Activated CD4-positive, alpha-beta memory T cell treated with anti-CD3 and anti-CD28 coated beads for 36 hours (primary cell): ENCODE measurements at regions of chr20 and their contacts with region 1.

Region 1: GRCh38 chr20:50179507-50180016 is 11.1 kb upstream of the CEBPB start:
- DNase-seq: no peak
- H3K4me3 Mint-ChIP-seq: no peak overlapping the region
- H3K27ac Mint-ChIP-seq: no peak overlapping the region
- H3K4me1 Mint-ChIP-seq: no peaks in the 10 kb centered on the region
- H3K27me3 Mint-ChIP-seq: peaks cover 3% of the 10 kb centered on the region

Region 2: GRCh38 chr20:50054626-50055511 is 124.7 kb before region 1 on chr20:
- CTCF ChIA-PET with region 1: no interaction called
- POLR2A ChIA-PET with region 1: no interaction called
- intact Hi-C with region 1: no loop called
- DNase-seq: no peak
- H3K4me3 Mint-ChIP-seq: no peak overlapping the region
- H3K27ac Mint-ChIP-seq: no peak overlapping the region
- H3K4me1 Mint-ChIP-seq: no peaks in the 10 kb centered on the region
- H3K27me3 Mint-ChIP-seq: peaks cover 6% of the 10 kb centered on the region

Region 3: DNA sequence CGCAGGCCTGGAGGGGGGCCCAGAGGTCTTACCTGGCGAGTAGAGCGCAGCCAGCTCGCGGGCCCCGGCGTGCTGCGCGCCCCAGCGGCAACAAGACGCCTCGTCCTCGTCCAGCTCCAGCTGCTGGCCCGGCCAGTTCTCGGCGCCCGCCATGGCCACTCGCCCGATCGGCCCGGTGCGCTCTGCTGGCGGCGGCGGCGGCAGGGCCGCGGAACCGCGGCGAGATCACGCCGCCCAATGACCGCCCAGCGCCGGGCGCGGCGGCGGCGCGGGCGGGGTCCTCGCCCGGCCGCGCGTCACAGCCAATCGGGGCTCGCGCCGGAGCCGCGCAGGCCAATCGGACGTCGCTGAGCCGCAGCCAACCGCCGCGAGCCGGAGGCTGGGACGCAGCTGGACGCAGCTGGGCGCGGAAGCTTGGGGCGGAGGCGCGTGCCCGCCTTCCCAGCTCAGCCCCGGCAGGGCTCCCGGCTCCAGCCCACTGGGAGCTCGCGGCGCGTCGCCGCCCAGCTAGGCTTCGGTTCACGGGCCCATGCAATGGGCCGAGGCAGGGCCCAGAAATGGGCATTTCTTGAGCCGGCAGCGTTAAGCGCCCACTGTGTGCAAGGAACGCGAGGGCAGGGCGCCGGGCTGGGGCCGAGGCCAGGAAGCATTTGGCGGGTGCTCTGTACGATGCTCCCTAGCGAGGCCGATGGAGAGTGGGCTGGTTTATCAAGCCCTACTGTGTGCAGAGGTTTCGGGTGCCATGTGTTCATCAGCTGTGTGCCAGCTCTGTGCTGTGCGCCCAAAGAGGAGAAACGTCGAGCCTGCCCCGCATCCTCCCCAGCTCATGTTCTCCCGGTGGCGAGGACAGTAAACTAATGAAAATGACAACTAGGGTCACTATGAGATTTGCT is 25.8 kb before region 1 on chr20 and contains the start of gene PEDS1:
- CTCF ChIA-PET with region 1: interaction called, 25 read pairs
- POLR2A ChIA-PET with region 1: no interaction called
- intact Hi-C with region 1: no loop called
- DNase-seq: peak; percentile 90
- H3K4me3 Mint-ChIP-seq: peak within 1 kb of the TSS; percentile 81
- H3K27ac Mint-ChIP-seq: peak within 1 kb of the TSS; percentile 70
- H3K4me1 Mint-ChIP-seq: peaks cover 43% of the 10 kb centered on the region
- H3K27me3 Mint-ChIP-seq: no peaks in the 10 kb centered on the region
- total RNA-seq, gene PEDS1: 15.0 to 16.9 TPM

Region 4: DNA sequence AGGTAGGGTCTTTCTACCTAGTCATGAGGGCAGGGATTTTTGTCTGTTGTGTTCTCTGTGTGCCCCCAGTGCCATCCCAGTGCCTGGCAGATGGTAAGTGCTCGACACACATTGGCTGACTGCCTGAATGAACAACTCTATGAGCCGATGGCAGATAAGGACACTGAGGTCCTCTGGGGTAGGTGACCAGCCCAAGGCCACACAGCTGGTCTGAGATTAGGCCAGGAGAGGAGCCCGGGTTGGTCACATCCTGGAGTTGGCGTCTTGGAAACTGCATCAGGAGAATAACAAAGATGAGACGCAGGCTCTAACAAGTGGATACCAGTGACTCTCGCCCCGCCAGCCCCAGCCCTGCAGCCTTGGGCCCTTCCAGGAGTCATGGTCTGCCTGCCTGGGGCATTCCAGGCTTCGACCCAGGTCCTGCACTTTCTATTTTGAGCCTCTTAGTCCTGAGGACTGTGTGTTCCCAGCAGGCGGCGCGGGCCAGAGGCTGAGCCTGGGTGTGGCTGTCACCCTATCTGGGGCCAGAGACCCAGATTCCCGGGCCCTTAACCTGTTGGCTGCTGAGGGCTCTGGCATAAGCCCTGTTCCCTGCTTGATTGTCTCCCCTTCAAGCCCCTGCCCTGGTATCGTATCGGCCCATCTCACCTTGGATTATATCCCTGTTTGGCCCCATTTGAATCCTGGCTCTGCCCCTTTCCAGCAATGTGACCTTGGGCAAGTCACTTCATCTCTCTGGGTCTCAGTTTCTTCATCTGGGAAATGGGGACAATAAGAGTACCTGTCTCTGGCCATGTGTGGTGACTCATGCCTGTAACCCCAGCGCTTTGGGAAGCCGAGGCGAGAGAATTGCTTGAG is 99.3 kb after region 1 on chr20:
- CTCF ChIA-PET with region 1: no interaction called
- POLR2A ChIA-PET with region 1: no interaction called
- intact Hi-C with region 1: no loop called
- DNase-seq: no peak
- H3K4me3 Mint-ChIP-seq: no peak overlapping the region
- H3K27ac Mint-ChIP-seq: no peak overlapping the region
- H3K4me1 Mint-ChIP-seq: peaks cover 6% of the 10 kb centered on the region
- H3K27me3 Mint-ChIP-seq: peaks cover 4% of the 10 kb centered on the region